ENCODE measurements at regions of chr19 and their contacts with region 1.

Region 1: DNA sequence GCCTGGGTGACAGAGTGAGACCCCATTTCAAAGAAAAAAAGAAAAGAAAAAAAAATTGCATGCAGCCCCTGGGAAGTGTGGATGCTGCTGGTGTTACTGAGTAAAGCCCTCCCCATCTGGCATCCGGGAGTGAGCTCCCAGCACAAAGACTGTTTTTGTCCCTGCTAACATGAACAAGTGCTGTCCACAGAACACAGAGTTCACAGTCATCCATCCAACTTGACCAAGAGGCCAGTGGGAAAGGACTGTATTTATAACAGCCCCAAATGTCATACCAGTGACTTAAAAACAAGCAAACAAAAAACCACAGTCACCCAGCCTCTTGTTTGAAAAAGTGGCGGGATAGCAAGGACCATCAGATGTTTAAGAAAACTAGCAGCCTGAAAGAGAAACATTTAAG is 10.8 kb downstream of the FBXO17 start:
- DNase-seq: no peak
- ATAC-seq: no peak
- H3K4me3 ChIP-seq: no peak overlapping the region
- H3K27ac ChIP-seq: no peak overlapping the region
- H3K4me1 ChIP-seq: peaks cover 21% of the 10 kb centered on the region
- CTCF ChIP-seq: no peak
- EP300 ChIP-seq: no peak
- POLR2A ChIP-seq: no peak
- RAD21 ChIP-seq: no peak

Region 2: GRCh38 chr19:38907227-38907626 is 57.5 kb before region 1 on chr19:
- CTCF ChIA-PET with region 1: no interaction called
- POLR2A ChIA-PET with region 1: no interaction called
- DNase-seq: no peak
- ATAC-seq: no peak
- H3K4me3 ChIP-seq: no peak overlapping the region
- H3K27ac ChIP-seq: no peak overlapping the region
- H3K4me1 ChIP-seq: peaks cover 10% of the 10 kb centered on the region
- CTCF ChIP-seq: no peak
- EP300 ChIP-seq: no peak
- POLR2A ChIP-seq: no peak
- RAD21 ChIP-seq: no peak

Region 3: GRCh38 chr19:38917516-38918491 is 46.9 kb before region 1 on chr19:
- CTCF ChIA-PET with region 1: no interaction called
- POLR2A ChIA-PET with region 1: no interaction called
- DNase-seq: peak; percentile 75 to 90
- ATAC-seq: peak; percentile 72 to 84
- H3K4me3 ChIP-seq: no peak overlapping the region
- H3K27ac ChIP-seq: peak overlapping the region in 1 of 2 experiments; percentile 14; a peak in 1 of 6 replicates
- H3K4me1 ChIP-seq: 0 out of 3 replicates have a peak, but pooled peaks cover 5% of the 10 kb centered on the region
- CTCF ChIP-seq: peak; percentile 49
- EP300 ChIP-seq: no peak
- POLR2A ChIP-seq: no peak
- RAD21 ChIP-seq: peak; percentile 48 to 59

Region 4: GRCh38 chr19:38949580-38950367 is 15.0 kb before region 1 on chr19:
- CTCF ChIA-PET with region 1: interaction called, 56 read pairs
- POLR2A ChIA-PET with region 1: interaction called, 6 read pairs
- DNase-seq: no peak
- ATAC-seq: no peak
- H3K4me3 ChIP-seq: no peak overlapping the region
- H3K27ac ChIP-seq: no peak overlapping the region
- H3K4me1 ChIP-seq: peaks cover 23% of the 10 kb centered on the region
- CTCF ChIP-seq: no peak
- EP300 ChIP-seq: no peak
- POLR2A ChIP-seq: peak; percentile 27
- RAD21 ChIP-seq: no peak

Region 5: GRCh38 chr19:39021063-39021462 is 56.3 kb after region 1 on chr19:
- CTCF ChIA-PET with region 1: interaction called, 12 read pairs
- POLR2A ChIA-PET with region 1: no interaction called
- DNase-seq: no peak
- ATAC-seq: no peak
- H3K4me3 ChIP-seq: no peak overlapping the region
- H3K27ac ChIP-seq: no peak overlapping the region
- H3K4me1 ChIP-seq: no peaks in the 10 kb centered on the region
- CTCF ChIP-seq: no peak
- EP300 ChIP-seq: no peak
- POLR2A ChIP-seq: no peak
- RAD21 ChIP-seq: no peak

Region 6: GRCh38 chr19:39078436-39079200 is 113.9 kb after region 1 on chr19:
- CTCF ChIA-PET with region 1: interaction called, 23 read pairs
- POLR2A ChIA-PET with region 1: no interaction called
- DNase-seq: peak; percentile 94 to 96
- ATAC-seq: peak; percentile 83 to 86
- H3K4me3 ChIP-seq: no peak overlapping the region
- H3K27ac ChIP-seq: peak overlapping the region; percentile 84 to 86
- H3K4me1 ChIP-seq: peaks cover 56% of the 10 kb centered on the region
- CTCF ChIP-seq: no peak
- EP300 ChIP-seq: peak; percentile 95 to 97; a peak in 4 of 5 replicates
- POLR2A ChIP-seq: no peak
- RAD21 ChIP-seq: no peak; a peak in 1 of 5 replicates

Region 7: DNA sequence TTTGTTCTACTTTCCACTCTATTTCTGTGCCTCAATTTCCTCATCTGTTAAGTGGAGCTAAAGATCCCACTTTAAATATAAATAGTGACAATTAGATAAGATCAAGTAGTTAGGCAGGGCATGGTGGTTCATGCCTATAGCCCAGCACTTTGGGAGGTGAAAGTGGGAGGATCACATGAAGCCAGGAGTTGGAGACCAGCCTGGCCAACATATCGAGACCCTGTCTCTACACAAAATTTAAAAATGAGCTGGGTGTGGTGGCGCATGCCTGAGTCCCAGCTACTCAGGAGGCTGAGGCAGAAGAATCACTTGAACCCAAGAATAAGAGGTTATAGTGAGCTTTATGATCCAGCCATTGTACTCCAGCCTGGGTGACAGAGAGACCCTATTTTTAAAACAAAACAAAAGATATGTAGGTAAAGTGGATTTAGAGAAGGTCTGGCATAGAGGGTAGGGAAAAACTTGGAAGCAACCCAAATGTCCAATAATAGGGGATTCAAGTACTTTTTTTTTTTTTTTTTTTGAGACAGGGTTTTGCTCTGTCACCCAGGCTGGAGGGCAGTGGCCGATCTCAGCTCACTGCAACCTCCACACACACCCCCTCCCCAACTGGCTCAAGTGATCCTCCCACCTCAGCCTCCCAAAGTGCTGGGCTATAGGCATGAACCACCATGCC is 155.0 kb after region 1 on chr19:
- CTCF ChIA-PET with region 1: interaction called, 39 read pairs
- POLR2A ChIA-PET with region 1: no interaction called
- DNase-seq: no peak
- ATAC-seq: no peak
- H3K4me3 ChIP-seq: no peak overlapping the region
- H3K27ac ChIP-seq: peak overlapping the region in 1 of 2 experiments; percentile 53; a peak in 4 of 6 replicates
- H3K4me1 ChIP-seq: peaks cover 19% of the 10 kb centered on the region
- CTCF ChIP-seq: no peak
- EP300 ChIP-seq: no peak
- POLR2A ChIP-seq: no peak
- RAD21 ChIP-seq: no peak

Region 8: DNA sequence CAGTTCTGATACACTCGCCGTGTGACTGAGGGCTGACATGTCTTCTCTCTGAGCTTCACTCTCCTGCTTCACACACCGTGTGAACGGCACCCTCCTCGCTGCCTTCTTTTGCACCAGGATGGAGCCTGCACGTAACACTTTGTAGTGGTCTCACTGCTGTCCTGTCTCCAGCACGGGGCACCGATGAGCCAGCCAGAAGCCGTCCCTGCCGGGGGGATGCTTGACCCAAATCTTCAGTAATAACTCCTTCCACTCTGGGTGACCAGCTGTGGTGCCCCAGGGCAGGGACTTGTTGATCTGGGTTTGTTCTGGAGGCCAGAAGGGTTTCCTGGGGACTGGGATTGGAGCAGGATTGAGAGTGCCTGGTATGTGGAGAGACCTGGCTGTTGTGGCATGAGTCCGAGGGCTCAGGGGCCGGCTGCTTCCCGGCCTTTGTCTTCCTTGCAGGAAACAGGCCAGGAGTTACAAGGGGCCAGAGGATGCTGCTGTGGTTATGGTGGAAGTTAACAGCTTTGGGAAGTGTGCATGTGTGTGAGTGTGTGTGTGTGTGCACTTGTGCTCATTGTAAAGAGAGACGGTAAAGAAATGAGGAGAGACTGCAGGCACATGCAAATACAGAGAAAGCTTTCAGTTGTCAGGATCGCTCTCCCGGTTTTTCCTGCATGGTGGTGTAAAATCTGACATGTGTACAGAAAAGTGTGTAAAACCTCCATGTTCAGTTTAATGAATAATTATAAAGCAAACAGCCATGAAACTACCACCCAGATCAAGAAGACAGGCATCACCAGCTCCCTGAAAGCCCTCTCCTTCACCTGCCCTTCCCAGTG is 179.7 kb after region 1 on chr19:
- CTCF ChIA-PET with region 1: interaction called, 13 read pairs
- POLR2A ChIA-PET with region 1: no interaction called
- DNase-seq: no peak
- ATAC-seq: peak; percentile 45 to 65
- H3K4me3 ChIP-seq: no peak overlapping the region
- H3K27ac ChIP-seq: peak overlapping the region in 1 of 2 experiments; percentile 53; a peak in 3 of 6 replicates
- H3K4me1 ChIP-seq: peaks cover 30% of the 10 kb centered on the region
- CTCF ChIP-seq: no peak
- EP300 ChIP-seq: no peak
- POLR2A ChIP-seq: no peak
- RAD21 ChIP-seq: no peak

Region 9: DNA sequence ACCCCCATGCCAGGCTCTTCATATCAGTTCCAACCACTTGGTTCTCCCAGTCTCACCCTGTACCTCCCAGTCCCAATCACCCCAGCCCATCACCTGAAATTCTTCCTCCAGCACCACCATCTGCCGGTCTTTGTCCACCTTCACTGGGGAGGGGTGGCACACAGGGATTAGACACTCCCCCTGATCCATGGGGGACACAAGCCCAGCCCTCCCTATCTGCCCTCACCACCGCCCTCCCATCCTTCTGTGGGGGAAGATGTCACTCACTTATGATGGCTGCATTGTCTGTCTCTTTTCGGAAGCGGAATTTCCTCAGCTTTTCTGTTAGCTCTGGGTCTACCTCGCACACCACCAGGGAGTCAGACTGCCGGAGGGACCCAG is 370.4 kb after region 1 on chr19:
- CTCF ChIA-PET with region 1: interaction called, 14 read pairs
- POLR2A ChIA-PET with region 1: no interaction called
- DNase-seq: no peak
- ATAC-seq: peak; percentile 8 to 33
- H3K4me3 ChIP-seq: no peak overlapping the region
- H3K27ac ChIP-seq: no peak overlapping the region
- H3K4me1 ChIP-seq: peaks cover 9% of the 10 kb centered on the region; the same call in 1 of the 3 replicates
- CTCF ChIP-seq: no peak
- EP300 ChIP-seq: no peak
- POLR2A ChIP-seq: no peak
- RAD21 ChIP-seq: no peak

Measured in A549 (cell line).